Activated naive CD4-positive, alpha-beta T cell treated with anti-CD3 and anti-CD28 coated beads for 36 hours (primary cell): ENCODE measurements at regions of chr10 and their contacts with region 1.

Region 1: GRCh38 chr10:113993489-113993991 is 50.1 kb upstream of the ADRB1 start:
- DNase-seq: no peak
- H3K4me3 Mint-ChIP-seq: no peak overlapping the region
- H3K27ac Mint-ChIP-seq: no peak overlapping the region
- H3K4me1 Mint-ChIP-seq: peaks cover 3% of the 10 kb centered on the region
- H3K27me3 Mint-ChIP-seq: peaks cover 18% of the 10 kb centered on the region

Region 2: GRCh38 chr10:114034923-114035645 is 41.5 kb after region 1 on chr10:
- CTCF ChIA-PET with region 1: no interaction called
- intact Hi-C with region 1: loop called (anchors 1 kb)
- DNase-seq: no peak
- H3K4me3 Mint-ChIP-seq: no peak overlapping the region
- H3K27ac Mint-ChIP-seq: no peak overlapping the region
- H3K4me1 Mint-ChIP-seq: no peaks in the 10 kb centered on the region
- H3K27me3 Mint-ChIP-seq: peaks cover 14% of the 10 kb centered on the region